T-cell (primary cell): ENCODE measurements at regions of chr1 and their contacts with region 1.

Region 1: DNA sequence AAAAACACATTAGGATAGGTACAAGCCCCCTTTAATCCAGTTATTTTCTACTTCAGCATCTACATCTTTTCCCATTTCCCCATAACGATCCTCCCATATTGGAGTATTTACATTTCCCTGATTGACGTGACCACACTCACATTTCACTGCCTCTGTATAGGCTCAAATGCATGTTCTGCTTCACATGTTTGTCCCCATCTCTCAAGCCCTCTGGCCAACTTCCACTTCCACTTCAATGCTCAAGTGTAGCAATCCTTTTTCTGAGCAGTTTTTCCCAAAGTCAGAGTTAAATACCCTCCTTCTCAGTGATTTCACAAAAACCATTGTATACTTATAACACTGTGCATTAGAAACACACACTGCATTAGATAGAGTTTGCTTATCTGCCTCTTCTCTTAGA is 61.8 kb upstream of the TTLL7 start:
- DNase-seq: no peak
- ATAC-seq: no peak
- H3K4me3 ChIP-seq: no peak overlapping the region
- H3K4me3 Mint-ChIP-seq: no peak overlapping the region
- H3K27ac ChIP-seq: no peak overlapping the region
- H3K27ac Mint-ChIP-seq: no peak overlapping the region
- H3K4me1 ChIP-seq: no peaks in the 10 kb centered on the region
- H3K4me1 Mint-ChIP-seq: no peaks in the 10 kb centered on the region
- H3K27me3 ChIP-seq: peaks cover 0 to 4% of the 10 kb centered on the region in 2 experiments
- H3K27me3 Mint-ChIP-seq: peaks cover 7 to 22% of the 10 kb centered on the region in 2 donors

Region 2: GRCh38 chr1:84048820-84049219 is 12.0 kb before region 1 on chr1:
- CTCF ChIA-PET with region 1: interaction called in 1 of 2 experiments, 10 read pairs
- POLR2A ChIA-PET with region 1: no interaction called
- DNase-seq: no peak
- ATAC-seq: no peak
- H3K4me3 ChIP-seq: no peak overlapping the region
- H3K4me3 Mint-ChIP-seq: no peak overlapping the region
- H3K27ac ChIP-seq: no peak overlapping the region
- H3K27ac Mint-ChIP-seq: no peak overlapping the region
- H3K4me1 ChIP-seq: no peaks in the 10 kb centered on the region
- H3K4me1 Mint-ChIP-seq: no peaks in the 10 kb centered on the region
- H3K27me3 ChIP-seq: no peaks in the 10 kb centered on the region
- H3K27me3 Mint-ChIP-seq: no peaks in the 10 kb centered on the region